GM10248 (cell line): ENCODE measurements at regions of chr16 and their contacts with region 1.

Region 1: GRCh38 chr16:67198238-67198734 is 645 bp upstream of the ELMO3 start:
- DNase-seq: no peak
- CTCF ChIP-seq: no peak

Region 2: GRCh38 chr16:67215706-67216105 is 17.4 kb after region 1 on chr16:
- CTCF ChIA-PET with region 1: interaction called, 10 read pairs
- POLR2A ChIA-PET with region 1: interaction called, 4 read pairs
- DNase-seq: no peak
- CTCF ChIP-seq: no peak

Region 3: GRCh38 chr16:67226804-67227557 is 28.7 kb after region 1 on chr16 and contains the start of gene TMEM208:
- CTCF ChIA-PET with region 1: interaction called, 16 read pairs
- POLR2A ChIA-PET with region 1: no interaction called
- DNase-seq: peak; percentile 99
- CTCF ChIP-seq: peak; percentile 13

Region 4: DNA sequence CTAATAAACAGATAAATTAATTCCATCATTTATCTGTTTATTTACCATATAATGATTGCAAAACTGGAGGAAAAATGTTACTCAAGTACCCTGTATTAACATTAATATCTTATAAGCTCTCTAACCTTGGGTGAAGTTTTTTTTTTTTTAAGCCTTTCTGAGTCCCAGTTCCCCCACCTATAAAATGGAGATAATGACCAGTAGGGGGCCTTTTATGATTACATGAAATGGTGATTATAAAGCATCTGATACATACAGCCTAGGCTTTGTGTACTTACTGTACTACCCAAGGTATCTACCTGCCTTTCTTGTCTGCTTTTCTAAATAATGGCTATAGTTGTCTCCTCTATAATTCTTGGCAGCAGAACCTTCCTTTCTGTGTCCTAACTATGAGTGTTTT is 150.9 kb after region 1 on chr16:
- CTCF ChIA-PET with region 1: no interaction called
- POLR2A ChIA-PET with region 1: no interaction called
- DNase-seq: no peak
- CTCF ChIP-seq: peak; percentile 31